ENCODE measurements at regions of chr10 and their contacts with region 1.

Region 1: GRCh38 chr10:9111976-9112375 is 1057.5 kb downstream of the GATA3 start:
- DNase-seq: no peak
- H3K4me3 ChIP-seq: no peak overlapping the region
- H3K27ac ChIP-seq: no peak overlapping the region
- H3K27me3 ChIP-seq: no peaks in the 10 kb centered on the region
- CTCF ChIP-seq: no peak

Region 2: DNA sequence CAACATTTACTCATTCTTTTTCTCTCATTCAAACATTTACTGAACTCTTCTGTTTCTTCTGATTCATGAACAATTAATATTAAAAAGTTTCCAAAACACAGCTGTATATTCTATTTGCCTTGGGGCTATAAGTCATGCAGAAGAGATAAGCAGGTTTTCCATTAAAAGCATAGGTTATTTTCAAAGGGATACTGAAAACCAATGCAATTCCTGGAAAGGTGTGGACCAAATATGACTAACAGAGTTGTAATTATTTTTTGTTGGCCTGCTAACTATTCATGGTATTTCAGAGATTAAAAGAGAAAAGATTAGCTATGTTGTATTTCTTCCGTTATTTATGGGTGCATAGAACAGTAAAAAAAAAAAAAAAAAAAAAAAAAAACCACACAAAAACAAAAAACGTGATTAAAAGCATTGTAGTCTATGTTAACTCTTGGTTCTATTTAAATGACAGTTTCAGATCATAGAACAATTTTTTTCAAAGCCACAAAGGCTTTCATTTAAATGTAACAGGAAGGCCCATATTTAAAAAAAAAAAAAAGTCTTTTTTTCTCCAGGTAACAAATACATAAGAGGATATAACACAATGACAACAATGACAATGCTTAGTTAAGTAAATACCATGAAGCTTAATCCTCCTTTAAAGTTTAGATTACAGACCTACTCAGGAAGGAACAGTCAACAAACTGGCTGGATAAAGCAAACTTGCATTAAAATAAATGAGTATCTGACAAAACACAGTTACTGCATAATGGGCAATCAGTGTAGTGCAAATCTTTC is 14.6 kb before region 1 on chr10:
- CTCF ChIA-PET with region 1: no interaction called
- POLR2A ChIA-PET with region 1: no interaction called
- DNase-seq: no peak
- H3K4me3 ChIP-seq: no peak overlapping the region
- H3K27ac ChIP-seq: no peak overlapping the region
- H3K27me3 ChIP-seq: no peaks in the 10 kb centered on the region
- CTCF ChIP-seq: no peak

Region 3: GRCh38 chr10:9126728-9127127 is 14.8 kb after region 1 on chr10:
- CTCF ChIA-PET with region 1: interaction called, 10 read pairs
- POLR2A ChIA-PET with region 1: no interaction called
- DNase-seq: no peak
- H3K4me3 ChIP-seq: no peak overlapping the region
- H3K27ac ChIP-seq: no peak overlapping the region
- H3K27me3 ChIP-seq: no peaks in the 10 kb centered on the region
- CTCF ChIP-seq: no peak